ENCODE measurements at regions of chr11 and their contacts with region 1.

Region 1: DNA sequence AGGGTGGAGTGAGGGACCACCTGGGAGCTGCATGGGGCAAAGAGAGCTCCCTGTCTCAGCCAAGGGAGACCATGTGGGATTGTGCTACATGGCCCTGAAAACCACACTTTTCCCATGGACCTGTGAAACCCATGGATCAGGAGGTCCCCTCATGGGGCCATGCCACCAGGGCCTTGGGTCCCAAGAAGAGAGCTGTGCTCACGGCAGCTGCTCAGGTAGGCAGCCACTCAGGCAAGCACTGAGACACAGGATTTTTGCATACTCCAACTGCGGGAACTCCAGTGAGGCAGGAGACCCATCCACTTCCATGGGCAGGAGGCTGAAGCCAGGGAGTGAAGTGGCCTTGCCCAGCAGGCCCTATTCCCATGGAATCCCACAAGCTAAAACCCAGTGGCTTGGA is 190.0 kb downstream of the KCNA4 start:
- DNase-seq: no peak
- ATAC-seq: no peak
- H3K4me3 ChIP-seq: no peak overlapping the region
- H3K4me3 Mint-ChIP-seq: no peak overlapping the region
- H3K27ac ChIP-seq: no peak overlapping the region
- H3K27ac Mint-ChIP-seq: no peak overlapping the region
- H3K4me1 ChIP-seq: no peaks in the 10 kb centered on the region
- H3K4me1 Mint-ChIP-seq: peaks cover 0 to 5% (median 0%) of the 10 kb centered on the region in 7 donors
- H3K27me3 ChIP-seq: no peaks in the 10 kb centered on the region
- H3K27me3 Mint-ChIP-seq: no peaks in the 10 kb centered on the region

Region 2: GRCh38 chr11:29712580-29712979 is 114.3 kb before region 1 on chr11:
- CTCF ChIA-PET with region 1: no interaction called
- POLR2A ChIA-PET with region 1: no interaction called
- intact Hi-C with region 1: no loop called
- DNase-seq: no peak
- ATAC-seq: no peak
- H3K4me3 ChIP-seq: no peak overlapping the region
- H3K4me3 Mint-ChIP-seq: no peak overlapping the region
- H3K27ac ChIP-seq: no peak overlapping the region
- H3K27ac Mint-ChIP-seq: no peak overlapping the region
- H3K4me1 ChIP-seq: no peaks in the 10 kb centered on the region
- H3K4me1 Mint-ChIP-seq: no peaks in the 10 kb centered on the region
- H3K27me3 ChIP-seq: no peaks in the 10 kb centered on the region
- H3K27me3 Mint-ChIP-seq: no peaks in the 10 kb centered on the region

Region 3: DNA sequence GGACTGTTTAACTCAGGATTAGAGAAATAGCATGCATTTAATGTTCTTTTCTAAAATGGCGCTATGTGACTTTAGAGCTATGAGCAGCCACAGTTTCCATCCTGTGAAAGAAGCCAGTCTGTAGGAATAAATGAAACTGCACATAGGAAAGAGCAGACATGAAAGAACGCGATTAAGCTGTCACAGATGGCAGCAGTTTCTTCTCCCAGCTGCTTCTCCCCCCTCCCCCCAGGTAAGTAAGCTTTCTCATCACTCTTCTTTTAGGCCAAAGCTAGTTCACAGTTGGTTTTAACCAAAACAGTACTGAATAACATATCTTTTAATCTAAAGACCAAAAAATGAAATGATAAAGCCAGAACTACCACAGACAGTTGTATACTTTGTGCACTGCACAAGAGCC is 76.5 kb before region 1 on chr11:
- CTCF ChIA-PET with region 1: no interaction called
- POLR2A ChIA-PET with region 1: no interaction called
- intact Hi-C with region 1: no loop called
- DNase-seq: no peak
- ATAC-seq: no peak
- H3K4me3 ChIP-seq: no peak overlapping the region
- H3K4me3 Mint-ChIP-seq: no peak overlapping the region
- H3K27ac ChIP-seq: no peak overlapping the region
- H3K27ac Mint-ChIP-seq: no peak overlapping the region
- H3K4me1 ChIP-seq: no peaks in the 10 kb centered on the region
- H3K4me1 Mint-ChIP-seq: no peaks in the 10 kb centered on the region
- H3K27me3 ChIP-seq: no peaks in the 10 kb centered on the region
- H3K27me3 Mint-ChIP-seq: no peaks in the 10 kb centered on the region

Region 4: GRCh38 chr11:29879560-29879959 is 52.7 kb after region 1 on chr11:
- CTCF ChIA-PET with region 1: no interaction called
- POLR2A ChIA-PET with region 1: no interaction called
- intact Hi-C with region 1: loop called in 1 of 2 experiments (anchors 2 kb)
- DNase-seq: no peak
- ATAC-seq: no peak
- H3K4me3 ChIP-seq: no peak overlapping the region
- H3K4me3 Mint-ChIP-seq: no peak overlapping the region
- H3K27ac ChIP-seq: no peak overlapping the region
- H3K27ac Mint-ChIP-seq: no peak overlapping the region
- H3K4me1 ChIP-seq: no peaks in the 10 kb centered on the region
- H3K4me1 Mint-ChIP-seq: no peaks in the 10 kb centered on the region
- H3K27me3 ChIP-seq: no peaks in the 10 kb centered on the region
- H3K27me3 Mint-ChIP-seq: no peaks in the 10 kb centered on the region